ENCODE measurements at regions of chr7 and their contacts with region 1.

Region 1: DNA sequence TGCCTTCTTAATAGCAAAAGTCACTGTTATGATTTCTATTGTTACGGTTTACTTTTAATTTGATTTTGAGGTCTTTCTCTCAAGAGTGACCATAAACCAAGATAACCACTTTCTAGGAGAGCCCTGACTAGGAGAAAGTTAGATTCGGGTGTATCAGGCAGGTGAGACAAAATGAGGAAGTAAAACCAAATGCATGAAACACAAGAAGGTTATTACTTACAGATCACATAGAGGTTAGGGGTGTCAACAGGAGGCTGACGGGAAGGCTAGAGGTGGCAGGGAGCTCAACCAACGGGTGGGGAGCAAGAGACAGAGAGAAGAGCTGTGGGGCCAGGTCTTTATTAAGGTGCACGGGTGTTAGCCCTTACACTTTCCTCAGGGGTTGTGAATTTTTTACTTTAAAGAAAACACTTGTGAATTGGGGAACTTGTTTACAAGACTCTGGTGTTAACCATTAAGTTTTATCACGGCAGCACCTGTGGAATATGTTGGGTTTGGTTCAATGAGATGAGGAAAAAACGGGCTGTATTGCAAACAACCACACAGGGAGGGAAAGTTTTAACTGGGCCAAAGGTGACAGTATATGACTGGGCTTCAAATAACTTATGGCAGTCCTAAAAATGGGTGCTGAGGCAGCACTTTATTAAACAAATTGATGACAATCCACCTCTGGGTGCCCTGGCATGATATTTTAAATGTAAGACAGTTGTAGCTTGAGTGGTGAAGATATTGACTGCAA is 154.9 kb downstream of the SDHAF3 start:
- H3K4me3 Mint-ChIP-seq: no peak overlapping the region
- H3K27ac Mint-ChIP-seq: no peak overlapping the region
- H3K4me1 Mint-ChIP-seq: no peaks in the 10 kb centered on the region
- H3K27me3 Mint-ChIP-seq: no peaks in the 10 kb centered on the region

Region 2: GRCh38 chr7:96962221-96962885 is 310.1 kb before region 1 on chr7:
- intact Hi-C with region 1: no loop called
- H3K4me3 Mint-ChIP-seq: no peak overlapping the region
- H3K27ac Mint-ChIP-seq: no peak overlapping the region
- H3K4me1 Mint-ChIP-seq: no peaks in the 10 kb centered on the region
- H3K27me3 Mint-ChIP-seq: no peaks in the 10 kb centered on the region

Region 3: GRCh38 chr7:97215556-97215955 is 56.9 kb before region 1 on chr7:
- intact Hi-C with region 1: loop called (anchors 10 kb)
- H3K4me3 Mint-ChIP-seq: no peak overlapping the region
- H3K27ac Mint-ChIP-seq: no peak overlapping the region
- H3K4me1 Mint-ChIP-seq: no peaks in the 10 kb centered on the region
- H3K27me3 Mint-ChIP-seq: no peaks in the 10 kb centered on the region

Region 4: DNA sequence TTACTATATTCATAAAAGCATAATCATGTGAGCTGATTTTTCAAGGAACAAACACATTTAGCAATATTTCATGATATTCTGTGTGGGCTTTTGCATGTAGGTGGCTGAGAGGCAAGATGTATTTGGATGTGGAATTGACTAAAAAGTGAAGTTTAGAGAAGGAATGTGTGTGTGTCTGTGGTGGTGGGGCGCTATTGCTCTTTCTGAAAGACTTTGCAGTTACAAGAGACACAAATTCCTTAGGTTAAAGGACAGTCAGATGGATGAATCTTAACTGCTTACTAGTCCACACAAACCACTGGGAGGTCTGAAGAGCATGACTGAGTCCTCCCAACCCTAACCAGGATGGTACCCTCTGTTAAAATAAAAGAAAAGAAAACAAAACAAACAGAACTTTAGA is 45.2 kb after region 1 on chr7:
- intact Hi-C with region 1: loop called (anchors 10 kb)
- H3K4me3 Mint-ChIP-seq: no peak overlapping the region
- H3K27ac Mint-ChIP-seq: no peak overlapping the region
- H3K4me1 Mint-ChIP-seq: no peaks in the 10 kb centered on the region
- H3K27me3 Mint-ChIP-seq: no peaks in the 10 kb centered on the region

Region 5: DNA sequence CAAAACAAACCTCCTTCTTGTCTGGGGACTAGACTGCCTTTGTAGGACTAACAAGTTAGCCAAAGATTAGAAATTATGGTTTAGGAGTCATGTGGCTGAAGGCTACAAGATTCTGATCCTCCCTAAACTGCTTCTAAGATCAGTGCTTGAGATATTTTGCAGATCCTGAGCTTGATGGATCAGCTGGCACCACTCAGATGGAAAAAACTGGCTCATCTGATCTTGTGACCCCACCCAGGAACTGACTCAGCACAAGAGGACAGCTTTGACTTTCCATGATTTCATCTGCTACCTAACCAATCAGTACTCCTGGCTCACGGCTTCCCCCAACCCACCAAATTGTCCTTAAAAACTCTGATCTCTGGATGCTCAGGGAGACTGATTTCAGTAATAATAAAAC is 188.0 kb after region 1 on chr7:
- intact Hi-C with region 1: no loop called
- H3K4me3 Mint-ChIP-seq: no peak overlapping the region
- H3K27ac Mint-ChIP-seq: no peak overlapping the region
- H3K4me1 Mint-ChIP-seq: no peaks in the 10 kb centered on the region
- H3K27me3 Mint-ChIP-seq: no peaks in the 10 kb centered on the region

Measured in dendritic cell treated with granulocyte-macrophage colony-stimulating factor and Interleukin-4, amounts not matched to agents 40 ng/mL and 50 ng/mL, for 4 days (primary cell).